ENCODE measurements at regions of chr13 and their contacts with region 1.

Region 1: GRCh38 chr13:40255551-40255950 is 410.9 kb downstream of the FOXO1 start:
- DNase-seq: no peak
- H3K4me3 ChIP-seq: no peak overlapping the region
- H3K27ac ChIP-seq: no peak overlapping the region
- H3K4me1 ChIP-seq: peaks cover 18% of the 10 kb centered on the region
- H3K27me3 ChIP-seq: no peaks in the 10 kb centered on the region
- CTCF ChIP-seq: no peak

Region 2: DNA sequence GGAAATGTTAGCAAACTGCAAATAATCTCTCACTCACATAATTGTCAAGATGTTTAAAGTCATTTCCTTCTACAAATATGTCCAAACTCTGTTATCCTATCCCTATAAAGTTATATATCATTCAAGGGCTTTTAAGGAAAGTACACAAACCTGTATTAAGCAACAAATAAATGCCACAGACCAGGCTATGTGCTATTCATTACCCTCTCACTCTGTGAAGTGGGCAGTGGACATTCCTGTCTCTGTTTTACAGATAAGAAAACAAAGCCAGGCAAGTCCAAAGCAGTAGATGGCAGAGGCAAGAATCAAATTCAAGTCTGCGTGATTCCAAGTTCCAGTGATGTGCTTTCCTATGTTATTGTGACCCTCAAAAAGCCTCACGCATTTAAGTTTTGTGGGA is 793.1 kb before region 1 on chr13:
- CTCF ChIA-PET with region 1: no interaction called
- POLR2A ChIA-PET with region 1: no interaction called
- intact Hi-C with region 1: no loop called
- DNase-seq: peak in 1 of 2 experiments; percentile 35
- H3K4me3 ChIP-seq: no peak overlapping the region
- H3K27ac ChIP-seq: no peak overlapping the region
- H3K4me1 ChIP-seq: no peaks in the 10 kb centered on the region
- H3K27me3 ChIP-seq: no peaks in the 10 kb centered on the region
- CTCF ChIP-seq: no peak

Region 3: GRCh38 chr13:40026174-40026585 is 229.4 kb before region 1 on chr13:
- CTCF ChIA-PET with region 1: interaction called, 13 read pairs
- POLR2A ChIA-PET with region 1: no interaction called
- intact Hi-C with region 1: no loop called
- DNase-seq: no peak
- H3K4me3 ChIP-seq: no peak overlapping the region
- H3K27ac ChIP-seq: no peak overlapping the region
- H3K4me1 ChIP-seq: no peaks in the 10 kb centered on the region
- H3K27me3 ChIP-seq: no peaks in the 10 kb centered on the region
- CTCF ChIP-seq: no peak